Left cardiac atrium (tissue), 4 donors: ENCODE measurements at regions of chr19 and their contacts with region 1.

Region 1: DNA sequence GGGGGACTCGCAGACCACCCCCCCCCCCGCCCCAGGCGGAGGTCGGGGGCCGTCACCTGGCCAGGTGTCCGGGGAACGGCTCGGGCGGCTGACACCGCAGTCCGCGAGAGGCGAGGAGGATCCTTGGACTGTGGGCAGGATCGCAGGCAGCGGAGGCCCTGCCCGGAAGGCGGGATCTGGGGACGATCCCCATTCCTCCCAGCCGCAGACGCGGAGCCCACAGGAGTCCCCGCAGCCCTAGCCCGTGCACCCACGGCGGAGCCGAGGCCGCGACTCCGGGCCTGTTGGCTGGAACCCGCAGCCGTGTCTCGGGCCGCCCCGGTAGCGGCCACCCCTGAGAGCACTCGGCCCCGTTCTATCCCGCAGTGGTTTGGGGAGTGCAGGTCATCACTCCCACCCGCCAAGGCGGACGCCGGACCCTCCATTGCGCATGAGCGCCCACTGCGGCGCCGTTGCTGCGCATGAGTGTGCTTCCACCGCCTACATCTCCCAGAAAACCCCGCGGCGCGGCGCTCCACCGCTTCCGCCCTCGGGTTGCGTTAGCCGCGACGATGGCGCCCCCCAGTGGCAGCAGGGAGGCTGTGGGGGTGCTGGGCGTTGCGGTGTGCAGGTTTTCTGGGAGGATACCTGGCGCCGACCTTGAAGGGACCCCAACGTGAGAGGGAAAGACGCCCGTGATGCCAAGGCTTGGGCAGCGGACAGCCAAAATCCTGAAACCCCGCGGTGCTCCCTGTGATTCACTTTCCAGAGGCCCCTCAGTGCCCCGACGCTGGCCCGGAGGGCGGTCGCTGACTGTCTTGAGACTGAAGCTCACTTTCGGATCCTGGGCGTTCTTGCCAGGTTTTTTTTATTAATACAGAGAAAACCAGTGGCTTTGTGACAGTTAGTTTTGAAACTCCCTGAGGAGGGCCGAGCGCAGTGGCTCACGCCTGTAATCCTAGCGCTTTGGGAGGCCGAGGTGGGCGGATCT is 4.4 kb upstream of the ZNF329 start:
- DNase-seq: peak; percentile 98
- ATAC-seq: peak; percentile 97 to 98

Region 2: DNA sequence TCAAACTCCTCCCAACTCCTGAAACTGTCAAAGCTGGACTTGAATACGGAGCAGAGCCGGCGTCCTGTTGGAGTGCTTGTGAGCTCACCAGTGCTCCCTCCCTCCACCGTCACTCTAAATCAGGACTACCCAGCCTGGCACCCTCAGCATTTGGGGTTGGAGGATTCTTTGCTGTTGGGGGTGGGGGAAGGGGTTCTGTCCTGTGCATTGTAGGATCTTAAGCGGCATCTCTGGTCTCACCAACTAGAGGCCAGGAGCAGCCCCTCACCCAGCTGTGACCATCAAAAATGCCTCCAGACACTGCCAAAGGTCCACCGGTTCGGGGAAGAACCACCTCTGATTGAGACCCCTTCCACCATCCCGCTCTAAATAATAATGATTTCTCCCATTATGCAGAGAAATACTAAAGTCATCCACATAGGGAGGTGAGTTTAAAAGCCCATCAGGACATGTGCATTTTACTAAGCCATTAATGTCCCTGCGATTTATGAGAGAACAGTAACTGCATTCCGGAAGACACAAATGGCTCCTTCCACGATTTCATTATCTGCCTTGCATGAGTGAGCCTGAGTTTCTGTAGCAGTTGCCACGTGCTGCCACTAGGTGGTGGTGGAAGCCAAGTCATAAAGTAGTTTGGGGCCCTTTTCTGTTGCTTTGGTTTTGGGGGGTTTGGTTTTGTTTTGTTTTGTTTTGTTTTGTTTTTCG is 1051.2 kb before region 1 on chr19:
- intact Hi-C with region 1: loop called in 1 of 2 experiments (anchors 10 kb)
- DNase-seq: peak; percentile 49
- ATAC-seq: peak; percentile 79 to 84

Region 3: GRCh38 chr19:57746580-57747471 is 408.1 kb before region 1 on chr19 and contains the start of gene ZNF776:
- intact Hi-C with region 1: loop called (anchors 10 kb)
- DNase-seq: peak; percentile 86
- ATAC-seq: peak; percentile 98 to 99
- total RNA-seq, gene ZNF776: 10.8 to 14.4 TPM

Region 4: GRCh38 chr19:57759096-57759495 is 395.9 kb before region 1 on chr19:
- intact Hi-C with region 1: loop called in 1 of 2 experiments (anchors 10 kb)
- DNase-seq: no peak
- ATAC-seq: no peak

Region 5: GRCh38 chr19:58021541-58022282 is 133.3 kb before region 1 on chr19:
- intact Hi-C with region 1: loop called (anchors 1 to 5 kb)
- DNase-seq: peak; percentile 62
- ATAC-seq: peak; percentile 93 to 96